Calu3 (cell line): ENCODE measurements at regions of chr11 and their contacts with region 1.

Region 1: DNA sequence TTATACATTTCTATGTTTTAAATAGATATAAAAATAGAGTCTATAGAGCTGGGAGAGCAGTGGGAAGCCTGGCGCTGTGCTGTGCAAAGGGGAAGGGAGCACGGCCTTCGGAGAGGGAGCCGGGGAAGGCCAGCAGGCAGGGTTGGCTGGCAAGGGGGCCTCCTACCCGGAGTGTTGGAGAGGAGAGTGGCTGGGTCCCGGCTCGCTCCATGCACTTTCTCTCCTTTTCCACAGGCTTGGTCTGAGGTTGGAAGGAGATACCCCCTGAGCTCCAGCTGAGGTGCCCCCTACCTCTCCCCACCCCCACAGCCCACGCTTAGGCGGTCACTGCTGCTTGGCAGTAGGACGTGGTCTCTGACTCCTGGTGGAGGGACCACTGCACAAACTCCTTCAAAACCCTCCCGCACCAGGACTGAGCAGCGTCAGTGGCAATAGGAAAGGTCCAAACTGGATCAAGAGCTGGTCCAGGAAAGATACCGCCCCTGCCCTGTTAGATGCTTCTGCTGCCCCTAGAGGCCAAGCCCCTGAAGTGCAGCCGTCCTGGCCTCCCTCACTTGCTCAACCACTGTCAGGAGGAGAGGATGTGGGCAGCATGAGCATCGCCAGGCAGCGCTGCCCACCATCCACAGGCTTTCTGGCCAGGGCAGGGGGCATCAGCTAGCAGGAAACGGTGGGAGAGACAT is 52.9 kb downstream of the SYT13 start:
- DNase-seq: peak; percentile 79
- H3K4me3 Mint-ChIP-seq: no peak overlapping the region
- H3K27ac Mint-ChIP-seq: no peak overlapping the region
- H3K4me1 Mint-ChIP-seq: no peaks in the 10 kb centered on the region
- H3K27me3 Mint-ChIP-seq: peaks cover 31% of the 10 kb centered on the region
- CTCF ChIP-seq: peak; percentile 83

Region 2: DNA sequence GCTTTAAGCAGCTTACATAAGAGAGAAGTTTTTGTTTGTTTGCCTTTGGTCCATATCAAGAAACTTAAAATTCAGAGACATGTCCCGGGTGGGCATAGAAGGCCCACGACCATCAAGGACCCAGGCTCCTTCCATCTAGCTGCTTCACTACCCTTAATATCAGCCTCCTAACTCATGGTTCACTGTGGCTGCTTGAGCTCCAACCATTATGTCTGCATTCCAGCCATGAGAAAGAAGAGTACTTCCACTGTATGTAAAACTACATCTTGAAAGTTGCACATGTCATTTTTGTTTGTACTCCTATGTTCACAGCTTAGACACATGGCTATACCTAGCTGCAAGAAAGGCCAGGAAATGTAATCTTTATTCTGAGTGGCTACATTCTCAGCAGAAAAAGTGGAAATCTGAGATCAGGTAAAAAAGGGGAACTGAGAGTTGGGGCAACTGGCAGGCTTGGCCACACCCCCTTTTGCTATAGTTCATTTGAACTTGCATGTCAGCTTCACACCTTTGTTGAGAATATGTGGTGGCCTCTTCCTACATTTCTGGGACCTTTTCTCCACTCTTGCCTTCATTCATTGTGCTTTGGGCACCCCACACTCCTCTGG is 201.2 kb before region 1 on chr11:
- CTCF ChIA-PET with region 1: no interaction called
- intact Hi-C with region 1: no loop called
- DNase-seq: no peak
- H3K4me3 Mint-ChIP-seq: no peak overlapping the region
- H3K27ac Mint-ChIP-seq: no peak overlapping the region
- H3K4me1 Mint-ChIP-seq: no peaks in the 10 kb centered on the region
- H3K27me3 Mint-ChIP-seq: peaks cover 92% of the 10 kb centered on the region
- CTCF ChIP-seq: no peak

Region 3: GRCh38 chr11:45518141-45518832 is 285.0 kb after region 1 on chr11:
- CTCF ChIA-PET with region 1: no interaction called
- intact Hi-C with region 1: no loop called
- DNase-seq: no peak
- H3K4me3 Mint-ChIP-seq: no peak overlapping the region
- H3K27ac Mint-ChIP-seq: no peak overlapping the region
- H3K4me1 Mint-ChIP-seq: no peaks in the 10 kb centered on the region
- H3K27me3 Mint-ChIP-seq: peaks cover 83% of the 10 kb centered on the region
- CTCF ChIP-seq: no peak

Region 4: DNA sequence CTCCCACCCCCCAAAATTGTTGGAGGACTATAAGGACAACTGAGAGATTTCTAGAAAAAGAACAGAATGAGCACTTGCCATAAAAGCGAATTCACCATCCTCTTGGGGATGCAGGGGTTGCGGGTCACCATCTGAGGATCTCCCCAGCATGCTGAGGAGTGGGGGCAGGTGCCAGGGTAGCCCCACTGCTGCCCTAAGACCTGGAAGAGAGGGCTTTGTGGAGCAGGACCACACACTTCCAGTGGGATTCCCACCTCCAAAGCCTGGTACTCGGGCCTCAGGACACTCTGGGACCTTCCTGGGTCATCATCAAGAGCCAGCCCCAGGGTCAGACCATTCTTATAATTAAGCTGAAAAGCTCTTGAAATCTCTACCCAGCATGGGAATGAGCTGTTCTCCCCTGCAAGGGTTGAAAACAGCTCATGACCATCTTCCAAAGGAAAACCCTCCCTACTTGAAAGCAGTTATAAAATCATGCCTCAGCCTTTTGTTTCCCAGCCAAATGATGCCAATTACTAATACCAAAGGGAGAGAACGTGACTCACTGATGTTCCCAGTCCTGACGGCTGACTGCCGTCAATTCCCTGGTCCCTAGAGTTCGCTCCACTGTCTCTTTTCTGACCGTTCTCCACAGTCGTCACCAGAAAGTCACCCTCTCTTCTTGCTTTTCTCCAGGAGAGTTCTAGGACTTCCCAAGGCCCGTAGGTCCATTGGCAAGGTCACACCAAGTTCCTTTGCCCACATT is 967.4 kb after region 1 on chr11:
- CTCF ChIA-PET with region 1: interaction called, 13 read pairs
- intact Hi-C with region 1: no loop called
- DNase-seq: no peak
- H3K4me3 Mint-ChIP-seq: no peak overlapping the region
- H3K27ac Mint-ChIP-seq: no peak overlapping the region
- H3K4me1 Mint-ChIP-seq: peaks cover 8% of the 10 kb centered on the region
- H3K27me3 Mint-ChIP-seq: peaks cover 92% of the 10 kb centered on the region
- CTCF ChIP-seq: no peak